Calu3 (cell line): ENCODE measurements at regions of chr4 and their contacts with region 1.

Region 1: DNA sequence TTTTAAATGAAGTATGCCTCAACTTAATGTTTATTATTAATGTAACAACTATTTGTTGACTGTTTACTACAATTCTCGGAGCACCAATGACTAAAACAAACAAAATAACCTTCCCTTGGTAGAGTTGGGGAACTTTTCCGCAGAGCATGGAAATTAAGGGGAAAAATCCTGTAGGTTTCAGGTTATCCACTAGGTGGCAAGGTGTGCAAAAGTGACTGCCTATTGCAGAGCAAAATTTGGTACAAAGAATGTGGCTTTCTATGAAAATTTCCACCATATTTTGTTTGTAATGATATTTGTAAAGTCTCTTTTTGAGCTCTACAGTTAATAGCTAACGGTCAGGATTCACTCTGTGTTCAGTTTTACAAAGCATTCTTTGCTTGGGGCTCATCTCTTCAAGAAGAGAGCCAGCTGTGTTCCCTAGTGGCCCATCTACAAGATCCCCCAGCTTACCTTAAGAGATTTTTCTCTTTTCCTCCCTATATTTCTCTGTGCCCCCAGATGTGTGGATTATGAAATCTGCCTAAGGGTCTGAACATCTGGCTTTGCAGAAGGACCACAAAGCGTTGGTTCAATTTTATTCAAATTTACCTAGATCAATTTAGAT is 61.1 kb downstream of the FBXO8 start:
- DNase-seq: peak; percentile 12
- H3K4me3 Mint-ChIP-seq: no peak overlapping the region
- H3K27ac Mint-ChIP-seq: no peak overlapping the region
- H3K4me1 Mint-ChIP-seq: no peaks in the 10 kb centered on the region
- H3K27me3 Mint-ChIP-seq: no peaks in the 10 kb centered on the region
- CTCF ChIP-seq: peak; percentile 44

Region 2: GRCh38 chr4:174201871-174202270 is 20.5 kb before region 1 on chr4:
- CTCF ChIA-PET with region 1: no interaction called
- intact Hi-C with region 1: loop called (anchors 2 kb)
- DNase-seq: no peak
- H3K4me3 Mint-ChIP-seq: no peak overlapping the region
- H3K27ac Mint-ChIP-seq: no peak overlapping the region
- H3K4me1 Mint-ChIP-seq: no peaks in the 10 kb centered on the region
- H3K27me3 Mint-ChIP-seq: no peaks in the 10 kb centered on the region
- CTCF ChIP-seq: no peak

Region 3: GRCh38 chr4:174260099-174260498 is 37.7 kb after region 1 on chr4:
- CTCF ChIA-PET with region 1: no interaction called
- intact Hi-C with region 1: loop called (anchors 2 kb)
- DNase-seq: no peak
- H3K4me3 Mint-ChIP-seq: peak overlapping the region; percentile 32
- H3K27ac Mint-ChIP-seq: no peak overlapping the region
- H3K4me1 Mint-ChIP-seq: no peaks in the 10 kb centered on the region
- H3K27me3 Mint-ChIP-seq: no peaks in the 10 kb centered on the region
- CTCF ChIP-seq: no peak